ENCODE measurements at regions of chr2 and their contacts with region 1.

Region 1: GRCh38 chr2:151271824-151272223 is 10.2 kb upstream of the RBM43 start:
- DNase-seq: no peak
- ATAC-seq: no peak
- H3K4me3 ChIP-seq: no peak overlapping the region
- H3K27ac ChIP-seq: no peak overlapping the region
- H3K4me1 ChIP-seq: peaks cover 5% of the 10 kb centered on the region; the same call in 1 of the 2 replicates
- H3K27me3 ChIP-seq: no peaks in the 10 kb centered on the region
- CTCF ChIP-seq: no peak

Region 2: GRCh38 chr2:151032741-151033191 is 239.1 kb before region 1 on chr2:
- CTCF ChIA-PET with region 1: no interaction called
- POLR2A ChIA-PET with region 1: no interaction called
- intact Hi-C with region 1: no loop called
- DNase-seq: peak; percentile 84
- ATAC-seq: peak; percentile 96
- H3K4me3 ChIP-seq: no peak overlapping the region
- H3K27ac ChIP-seq: no peak overlapping the region
- H3K4me1 ChIP-seq: peaks cover 10% of the 10 kb centered on the region; the same call in 1 of the 2 replicates
- H3K27me3 ChIP-seq: no peaks in the 10 kb centered on the region
- CTCF ChIP-seq: no peak

Region 3: GRCh38 chr2:151189125-151189524 is 82.7 kb before region 1 on chr2:
- CTCF ChIA-PET with region 1: no interaction called
- POLR2A ChIA-PET with region 1: no interaction called
- intact Hi-C with region 1: no loop called
- DNase-seq: no peak
- ATAC-seq: no peak; the same call in 1 of the 2 replicates
- H3K4me3 ChIP-seq: no peak overlapping the region
- H3K27ac ChIP-seq: no peak overlapping the region
- H3K4me1 ChIP-seq: no peaks in the 10 kb centered on the region; the same call in 1 of the 2 replicates
- H3K27me3 ChIP-seq: no peaks in the 10 kb centered on the region
- CTCF ChIP-seq: no peak

Region 4: GRCh38 chr2:151297882-151298281 is 26.1 kb after region 1 on chr2:
- CTCF ChIA-PET with region 1: no interaction called
- POLR2A ChIA-PET with region 1: no interaction called
- intact Hi-C with region 1: no loop called
- DNase-seq: peak; percentile 15
- ATAC-seq: peak; percentile 27; the same call in 1 of the 2 replicates
- H3K4me3 ChIP-seq: no peak overlapping the region
- H3K27ac ChIP-seq: no peak overlapping the region
- H3K4me1 ChIP-seq: no peaks in the 10 kb centered on the region; the same call in 1 of the 2 replicates
- H3K27me3 ChIP-seq: no peaks in the 10 kb centered on the region
- CTCF ChIP-seq: no peak

Region 5: GRCh38 chr2:152708742-152709141 is 1436.9 kb after region 1 on chr2:
- CTCF ChIA-PET with region 1: no interaction called
- POLR2A ChIA-PET with region 1: interaction called, 10 read pairs
- intact Hi-C with region 1: no loop called
- DNase-seq: no peak
- ATAC-seq: no peak
- H3K4me3 ChIP-seq: no peak overlapping the region
- H3K27ac ChIP-seq: no peak overlapping the region
- H3K4me1 ChIP-seq: no peaks in the 10 kb centered on the region
- H3K27me3 ChIP-seq: no peaks in the 10 kb centered on the region
- CTCF ChIP-seq: no peak